ENCODE measurements at regions of chr1 and their contacts with region 1.

Region 1: GRCh38 chr1:93846211-93846991 is 32.6 kb downstream of the DNTTIP2 start:
- DNase-seq: peak; percentile 74 to 95 (median 84)
- ATAC-seq: peak; percentile 46
- H3K4me3 ChIP-seq: peak overlapping the region; percentile 95
- H3K4me3 Mint-ChIP-seq: peak overlapping the region; percentile 89
- H3K27ac ChIP-seq: peak overlapping the region; percentile 79 to 87
- H3K27ac Mint-ChIP-seq: peak overlapping the region; percentile 100
- H3K4me1 ChIP-seq: peaks cover 23% of the 10 kb centered on the region
- H3K4me1 Mint-ChIP-seq: peaks cover 37% of the 10 kb centered on the region
- H3K27me3 ChIP-seq: no peaks in the 10 kb centered on the region
- H3K27me3 Mint-ChIP-seq: peaks cover 7% of the 10 kb centered on the region
- CTCF ChIP-seq: no peak

Region 2: GRCh38 chr1:93078986-93079654 is 767.3 kb before region 1 on chr1 and contains the start of gene MTF2:
- CTCF ChIA-PET with region 1: interaction called, 5 read pairs
- POLR2A ChIA-PET with region 1: interaction called, 6 read pairs
- intact Hi-C with region 1: loop called in 1 of 2 experiments (anchors 10 kb)
- DNase-seq: peak; percentile 87 to 96 (median 92)
- ATAC-seq: peak; percentile 85
- H3K4me3 ChIP-seq: peak within 1 kb of the TSS; percentile 86
- H3K4me3 Mint-ChIP-seq: peak within 1 kb of the TSS; percentile 99
- H3K27ac ChIP-seq: peak within 1 kb of the TSS; percentile 81 to 82
- H3K27ac Mint-ChIP-seq: peak within 1 kb of the TSS; percentile 96
- H3K4me1 ChIP-seq: peaks cover 17% of the 10 kb centered on the region
- H3K4me1 Mint-ChIP-seq: peaks cover 61% of the 10 kb centered on the region
- H3K27me3 ChIP-seq: no peaks in the 10 kb centered on the region
- H3K27me3 Mint-ChIP-seq: no peaks in the 10 kb centered on the region
- CTCF ChIP-seq: no peak
- total RNA-seq, gene MTF2: 37.9 to 39.3 TPM

Region 3: GRCh38 chr1:93345633-93346420 is 500.6 kb before region 1 on chr1 and contains the start of gene DR1:
- CTCF ChIA-PET with region 1: interaction called, 5 read pairs
- POLR2A ChIA-PET with region 1: interaction called, 22 read pairs
- intact Hi-C with region 1: loop called (anchors 5 kb)
- DNase-seq: peak; percentile 85 to 94 (median 87)
- ATAC-seq: peak; percentile 79
- H3K4me3 ChIP-seq: peak within 1 kb of the TSS; percentile 90
- H3K4me3 Mint-ChIP-seq: peak within 1 kb of the TSS; percentile 99
- H3K27ac ChIP-seq: peak within 1 kb of the TSS; percentile 87 to 94
- H3K27ac Mint-ChIP-seq: peak within 1 kb of the TSS; percentile 96
- H3K4me1 ChIP-seq: peaks cover 9% of the 10 kb centered on the region
- H3K4me1 Mint-ChIP-seq: peaks cover 61% of the 10 kb centered on the region
- H3K27me3 ChIP-seq: no peaks in the 10 kb centered on the region
- H3K27me3 Mint-ChIP-seq: no peaks in the 10 kb centered on the region
- CTCF ChIP-seq: no peak
- total RNA-seq, gene DR1: 51.4 to 54.4 TPM

Region 4: DNA sequence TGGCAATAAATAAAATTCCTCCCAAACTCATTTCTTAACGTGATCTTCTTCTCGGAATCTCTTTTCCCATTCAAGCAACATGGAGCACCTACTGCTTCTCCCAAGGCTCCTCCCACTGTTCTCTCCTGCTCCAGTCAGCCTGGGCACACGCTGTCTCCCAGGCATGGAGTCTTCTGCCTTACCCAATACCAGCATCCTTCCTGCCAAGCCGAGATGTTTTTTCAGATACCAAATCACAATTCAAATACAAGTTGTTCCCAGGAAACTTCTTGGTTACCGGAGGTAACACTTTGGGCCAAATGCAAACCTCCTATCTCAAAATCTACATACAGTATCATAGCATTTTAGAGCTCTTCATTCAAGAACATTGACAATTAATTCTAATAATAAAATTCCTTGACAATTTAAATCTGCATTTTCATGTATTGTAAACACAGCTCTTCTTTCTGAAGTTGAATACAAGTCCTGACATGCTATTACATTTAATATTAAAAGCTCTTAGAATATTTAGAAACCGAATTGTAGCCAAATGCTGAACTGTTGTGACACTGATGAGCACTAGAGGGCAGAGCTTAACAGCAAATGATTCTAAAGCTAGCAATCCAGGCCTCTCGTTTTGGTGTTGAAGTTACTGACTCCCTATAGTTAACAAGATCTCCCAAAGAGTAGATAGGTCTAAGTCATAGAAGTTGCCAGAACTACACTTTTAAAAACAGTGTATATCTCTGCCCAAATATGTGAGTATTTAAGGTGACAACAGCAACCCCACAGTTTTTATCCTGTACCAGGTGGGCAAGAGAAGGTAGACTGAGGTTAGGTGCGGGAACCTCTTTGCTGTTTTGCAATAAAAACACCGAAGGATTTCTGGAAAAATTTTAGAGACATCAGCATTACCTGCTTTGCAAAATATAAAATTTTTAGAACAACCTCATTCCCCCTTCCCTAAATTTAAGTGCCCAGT is 217.0 kb before region 1 on chr1:
- CTCF ChIA-PET with region 1: interaction called, 40 read pairs
- POLR2A ChIA-PET with region 1: interaction called, 19 read pairs
- intact Hi-C with region 1: loop called (anchors 1 kb)
- DNase-seq: peak in 11 of 14 experiments; percentile 9 to 80 (median 33)
- ATAC-seq: peak; percentile 88
- H3K4me3 ChIP-seq: no peak overlapping the region
- H3K4me3 Mint-ChIP-seq: no peak overlapping the region
- H3K27ac ChIP-seq: no peak overlapping the region
- H3K27ac Mint-ChIP-seq: no peak overlapping the region
- H3K4me1 ChIP-seq: no peaks in the 10 kb centered on the region
- H3K4me1 Mint-ChIP-seq: no peaks in the 10 kb centered on the region
- H3K27me3 ChIP-seq: no peaks in the 10 kb centered on the region
- H3K27me3 Mint-ChIP-seq: no peaks in the 10 kb centered on the region
- CTCF ChIP-seq: peak; percentile 90

Region 5: GRCh38 chr1:93758842-93759515 is 87.4 kb before region 1 on chr1:
- CTCF ChIA-PET with region 1: no interaction called
- POLR2A ChIA-PET with region 1: no interaction called
- intact Hi-C with region 1: no loop called
- DNase-seq: peak in 3 of 14 experiments; percentile 9 to 43 (median 18)
- ATAC-seq: no peak
- H3K4me3 ChIP-seq: no peak overlapping the region
- H3K4me3 Mint-ChIP-seq: no peak overlapping the region
- H3K27ac ChIP-seq: no peak overlapping the region
- H3K27ac Mint-ChIP-seq: no peak overlapping the region
- H3K4me1 ChIP-seq: peaks cover 10% of the 10 kb centered on the region
- H3K4me1 Mint-ChIP-seq: no peaks in the 10 kb centered on the region
- H3K27me3 ChIP-seq: no peaks in the 10 kb centered on the region
- H3K27me3 Mint-ChIP-seq: no peaks in the 10 kb centered on the region
- CTCF ChIP-seq: no peak

Region 6: GRCh38 chr1:93909146-93910050 is 63.0 kb after region 1 on chr1 and contains the start of gene GCLM:
- CTCF ChIA-PET with region 1: interaction called, 16 read pairs
- POLR2A ChIA-PET with region 1: interaction called, 44 read pairs
- intact Hi-C with region 1: loop called (anchors 1 to 2 kb)
- DNase-seq: peak; percentile 78 to 95 (median 86)
- ATAC-seq: peak; percentile 89
- H3K4me3 ChIP-seq: peak within 1 kb of the TSS; percentile 68
- H3K4me3 Mint-ChIP-seq: peak within 1 kb of the TSS; percentile 96
- H3K27ac ChIP-seq: peak within 1 kb of the TSS; percentile 25 to 73
- H3K27ac Mint-ChIP-seq: peak within 1 kb of the TSS; percentile 83
- H3K4me1 ChIP-seq: peaks cover 20% of the 10 kb centered on the region
- H3K4me1 Mint-ChIP-seq: peaks cover 44% of the 10 kb centered on the region
- H3K27me3 ChIP-seq: no peaks in the 10 kb centered on the region
- H3K27me3 Mint-ChIP-seq: no peaks in the 10 kb centered on the region
- CTCF ChIP-seq: peak; percentile 78
- total RNA-seq, gene GCLM: 6.1 to 6.8 TPM

Measured in CD4-positive, alpha-beta T cell (primary cell).